ENCODE measurements at regions of chr13 and their contacts with region 1.

Region 1: DNA sequence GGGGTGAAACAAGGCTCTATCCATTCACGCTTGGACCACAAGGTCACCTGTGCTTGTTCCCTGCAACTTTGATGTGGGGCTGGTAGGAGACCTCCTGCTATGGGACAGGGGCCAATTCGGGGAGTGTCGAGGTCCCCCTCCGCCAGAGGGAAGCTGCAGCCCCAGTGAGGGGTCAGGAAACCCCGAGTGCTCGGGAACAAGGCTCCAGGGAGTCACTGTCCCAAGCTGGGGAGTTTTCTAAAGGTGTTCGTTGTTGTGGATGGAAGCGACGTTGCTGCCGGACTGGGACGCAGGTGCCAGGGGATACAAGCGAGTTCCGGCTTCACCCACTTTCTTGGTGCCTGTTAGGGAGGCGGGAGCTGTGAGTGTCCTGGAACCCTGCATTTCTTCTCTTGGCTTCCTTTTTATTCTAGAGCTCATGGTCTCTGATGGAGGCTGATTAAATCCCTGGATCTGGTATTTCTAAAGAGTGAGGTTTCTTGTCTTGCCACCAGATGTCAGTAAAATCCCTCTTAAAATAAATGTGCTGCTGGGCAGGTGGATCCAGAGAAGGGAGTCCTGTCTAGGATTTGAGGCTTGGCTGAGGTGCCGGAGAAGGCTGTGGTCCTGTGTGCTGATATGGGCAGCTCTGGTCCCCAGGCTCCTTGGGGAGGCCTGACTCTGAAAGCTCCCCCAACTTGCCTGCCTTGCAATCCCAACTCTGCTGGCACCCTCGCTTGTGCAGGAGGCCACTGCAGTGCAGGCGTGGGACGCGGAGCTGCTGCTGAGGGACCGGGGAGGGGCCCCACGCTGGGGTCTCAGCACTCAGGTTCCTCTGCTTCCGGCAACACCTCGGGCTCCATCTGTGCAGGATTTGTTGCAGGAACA is 153.9 kb downstream of the TEX29 start:
- DNase-seq: no peak
- ATAC-seq: peak; percentile 56 to 61

Region 2: GRCh38 chr13:112606109-112607001 is 1132.0 kb after region 1 on chr13:
- intact Hi-C with region 1: loop called in 1 of 2 experiments (anchors 10 kb)
- DNase-seq: peak; percentile 95
- ATAC-seq: peak; percentile 100